ENCODE measurements at regions of chr17 and their contacts with region 1.

Region 1: GRCh38 chr17:7687908-7688807 is at the start of gene WRAP53:
- DNase-seq: peak; percentile 97
- ATAC-seq: peak; percentile 81
- H3K4me3 Mint-ChIP-seq: peak within 1 kb of the TSS; percentile 83
- H3K27ac Mint-ChIP-seq: peak within 1 kb of the TSS; percentile 97
- H3K4me1 Mint-ChIP-seq: peaks cover 35% of the 10 kb centered on the region
- H3K27me3 Mint-ChIP-seq: no peaks in the 10 kb centered on the region
- total RNA-seq, gene WRAP53: 23.5 to 27.1 TPM

Region 2: DNA sequence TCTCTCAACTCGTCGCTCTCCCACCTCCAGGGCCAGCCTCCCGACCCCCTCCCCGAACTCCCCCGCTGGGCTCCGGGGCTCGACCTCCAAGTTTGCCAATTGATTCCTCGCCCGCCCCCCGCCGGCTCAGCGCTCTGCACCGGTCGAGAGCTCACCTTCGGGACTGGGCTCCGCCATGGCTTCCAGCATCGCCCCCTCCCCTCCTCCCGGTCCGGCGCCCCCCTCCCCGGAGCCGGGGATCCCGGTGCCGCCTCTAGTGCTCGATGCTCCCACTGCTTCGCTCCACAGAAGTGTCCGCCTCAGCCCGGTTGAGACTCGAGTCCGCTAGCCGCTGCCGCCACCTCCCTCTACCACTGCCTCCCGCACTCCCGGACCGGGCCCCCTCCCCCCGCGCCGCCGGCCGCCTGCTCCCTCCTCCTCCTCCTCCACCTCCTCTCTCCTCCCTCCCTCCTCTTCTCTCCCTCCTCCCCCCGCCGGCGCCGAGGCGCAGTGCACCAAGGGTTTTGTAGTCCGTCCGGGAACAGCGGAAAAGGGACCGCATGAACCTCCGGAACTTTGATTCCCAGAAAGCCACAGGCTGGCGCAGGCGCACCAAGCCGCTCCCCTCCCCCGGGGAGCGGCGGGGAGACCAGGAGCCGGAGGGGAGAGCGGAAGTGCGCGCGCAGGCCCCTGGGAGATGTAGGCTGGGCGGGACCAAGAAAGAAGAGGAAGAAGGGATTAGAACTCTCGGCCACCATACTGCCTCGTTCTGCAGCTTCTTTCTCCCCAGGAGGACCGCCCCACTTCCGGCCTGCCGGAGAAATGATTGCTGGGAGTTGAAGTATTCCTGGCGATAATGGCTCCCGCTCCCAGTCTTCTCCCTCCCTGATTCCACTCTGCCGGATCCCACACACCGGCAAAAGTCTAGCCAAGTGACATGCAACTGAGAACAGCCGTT is 448.8 kb before region 1 on chr17 and contains the start of gene PHF23:
- CTCF ChIA-PET with region 1: interaction called, 3 read pairs
- POLR2A ChIA-PET with region 1: no interaction called
- intact Hi-C with region 1: loop called in 1 of 2 experiments (anchors 1 kb)
- DNase-seq: peak; percentile 99
- ATAC-seq: peak; percentile 74
- H3K4me3 Mint-ChIP-seq: peak within 1 kb of the TSS; percentile 97
- H3K27ac Mint-ChIP-seq: peak within 1 kb of the TSS; percentile 93
- H3K4me1 Mint-ChIP-seq: peaks cover 61% of the 10 kb centered on the region
- H3K27me3 Mint-ChIP-seq: no peaks in the 10 kb centered on the region
- total RNA-seq, gene PHF23: 23.6 to 35.2 TPM

Region 3: GRCh38 chr17:7435221-7435675 is 252.9 kb before region 1 on chr17 and contains the start of gene TMEM102:
- CTCF ChIA-PET with region 1: interaction called, 16 read pairs
- POLR2A ChIA-PET with region 1: interaction called, 8 read pairs
- intact Hi-C with region 1: loop called (anchors 1 kb)
- DNase-seq: peak; percentile 99
- ATAC-seq: peak; percentile 84
- H3K4me3 Mint-ChIP-seq: peak within 1 kb of the TSS; percentile 92
- H3K27ac Mint-ChIP-seq: peak within 1 kb of the TSS; percentile 92
- H3K4me1 Mint-ChIP-seq: peaks cover 33% of the 10 kb centered on the region
- H3K27me3 Mint-ChIP-seq: peaks cover 11% of the 10 kb centered on the region
- total RNA-seq, gene TMEM102: 8.7 to 10.7 TPM

Region 4: GRCh38 chr17:7572588-7573323 is 115.4 kb before region 1 on chr17:
- CTCF ChIA-PET with region 1: interaction called, 5 read pairs
- POLR2A ChIA-PET with region 1: interaction called, 25 read pairs
- intact Hi-C with region 1: loop called (anchors 1 kb)
- DNase-seq: peak; percentile 100
- ATAC-seq: peak; percentile 92
- H3K4me3 Mint-ChIP-seq: peak overlapping the region; percentile 94
- H3K27ac Mint-ChIP-seq: peak overlapping the region; percentile 99
- H3K4me1 Mint-ChIP-seq: peaks cover 51% of the 10 kb centered on the region
- H3K27me3 Mint-ChIP-seq: no peaks in the 10 kb centered on the region

Region 5: GRCh38 chr17:7703584-7704479 is 15.7 kb after region 1 on chr17:
- CTCF ChIA-PET with region 1: interaction called, 25 read pairs
- POLR2A ChIA-PET with region 1: interaction called, 6 read pairs
- intact Hi-C with region 1: no loop called
- DNase-seq: peak; percentile 36
- ATAC-seq: peak; percentile 53
- H3K4me3 Mint-ChIP-seq: no peak overlapping the region
- H3K27ac Mint-ChIP-seq: no peak overlapping the region
- H3K4me1 Mint-ChIP-seq: peaks cover 14% of the 10 kb centered on the region
- H3K27me3 Mint-ChIP-seq: peaks cover 40% of the 10 kb centered on the region

Region 6: DNA sequence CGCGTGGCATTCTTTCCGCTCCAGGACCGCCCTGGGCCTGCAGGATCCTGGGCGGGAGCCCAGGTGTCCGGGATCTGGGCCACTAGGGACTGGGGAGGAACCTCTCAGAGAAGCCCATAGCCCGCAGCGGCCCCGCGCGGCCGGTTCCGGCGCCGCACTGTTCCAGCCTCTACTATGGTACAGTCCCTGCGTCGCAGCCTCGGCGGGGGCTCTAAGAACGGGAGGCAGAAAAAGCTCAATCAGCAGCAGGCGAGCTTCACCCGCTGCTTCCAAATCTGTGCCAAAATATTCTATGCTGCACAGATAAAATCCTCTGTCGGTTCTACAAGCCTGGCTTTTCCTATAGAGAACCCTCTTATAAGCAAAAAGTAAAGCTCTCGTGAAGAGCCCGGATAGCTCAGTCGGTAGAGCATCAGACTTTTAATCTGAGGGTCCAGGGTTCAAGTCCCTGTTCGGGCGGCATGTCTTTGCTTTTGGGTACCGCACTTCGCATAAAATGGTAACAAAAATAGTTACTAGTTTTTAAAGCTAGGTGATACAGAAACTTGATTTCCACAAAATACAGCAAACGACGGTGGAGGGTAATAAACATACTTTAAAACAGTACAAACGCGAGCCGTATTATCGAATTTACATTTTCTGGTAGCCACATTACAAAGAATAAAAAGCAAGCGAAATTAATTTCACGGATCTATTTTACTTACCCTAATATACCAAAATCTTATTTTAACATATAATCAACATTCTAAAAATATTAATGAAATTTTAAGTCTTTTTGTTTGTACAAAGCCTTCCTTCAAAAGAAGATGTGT is 430.8 kb after region 1 on chr17:
- CTCF ChIA-PET with region 1: interaction called, 6 read pairs
- POLR2A ChIA-PET with region 1: no interaction called
- intact Hi-C with region 1: loop called in 1 of 2 experiments (anchors 2 kb)
- DNase-seq: peak; percentile 94
- ATAC-seq: peak; percentile 58
- H3K4me3 Mint-ChIP-seq: peak overlapping the region; percentile 90
- H3K27ac Mint-ChIP-seq: peak overlapping the region; percentile 94
- H3K4me1 Mint-ChIP-seq: peaks cover 46% of the 10 kb centered on the region
- H3K27me3 Mint-ChIP-seq: peaks cover 29% of the 10 kb centered on the region